Right cardiac atrium (tissue), 5 donors: ENCODE measurements at regions of chr11 and their contacts with region 1.

Region 1: DNA sequence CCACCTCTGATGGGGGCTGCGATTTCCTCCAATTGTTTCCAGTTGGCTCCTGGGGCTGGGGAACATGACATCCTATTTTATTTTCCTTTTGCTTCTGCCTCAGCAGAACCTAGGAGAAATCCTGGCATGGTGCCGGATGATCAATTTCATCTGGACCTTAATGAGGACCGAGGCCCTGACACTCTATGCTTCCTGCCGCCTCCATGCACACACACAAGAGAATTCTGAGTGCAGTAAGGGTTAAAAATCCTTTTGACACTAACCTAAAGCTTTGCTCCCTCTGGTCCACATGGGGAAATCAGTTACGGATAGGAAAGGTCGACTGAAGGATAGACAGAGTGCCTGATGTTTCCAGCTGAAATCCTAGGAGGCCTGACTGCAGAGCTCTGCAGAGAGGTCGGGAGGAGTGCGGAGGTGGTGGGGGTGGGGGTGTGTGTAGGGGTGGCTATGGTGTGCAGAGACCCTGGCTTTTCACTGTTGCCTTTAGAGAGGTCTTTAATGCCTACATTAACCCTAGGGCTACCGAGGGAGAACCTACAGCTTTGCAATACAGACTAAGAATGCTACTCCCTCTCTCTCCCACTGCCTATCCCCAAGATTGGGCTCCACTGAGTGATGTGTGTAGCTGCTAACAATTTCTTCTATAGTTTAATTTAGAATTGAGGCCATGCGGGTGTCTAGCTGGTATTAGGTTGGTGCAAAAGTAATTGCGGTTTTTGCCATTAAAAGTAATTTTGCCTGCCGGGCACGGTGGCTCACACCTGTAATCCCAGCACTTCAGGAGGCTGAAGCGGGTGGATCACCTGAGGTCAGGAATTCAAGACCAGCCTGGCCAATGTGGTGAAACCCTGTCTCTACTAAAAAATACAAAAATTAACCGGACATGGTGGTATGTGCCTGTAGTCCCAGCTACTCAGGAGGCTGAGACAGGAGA is 53.6 kb upstream of the INCENP start:
- DNase-seq: no peak
- ATAC-seq: no peak
- H3K4me3 ChIP-seq: no peak overlapping the region
- H3K27ac ChIP-seq: no peak overlapping the region
- H3K4me1 ChIP-seq: no peaks in the 10 kb centered on the region
- H3K27me3 ChIP-seq: no peaks in the 10 kb centered on the region

Region 2: GRCh38 chr11:61369372-61370219 is 700.7 kb before region 1 on chr11:
- intact Hi-C with region 1: no loop called
- DNase-seq: peak; percentile 60 to 80 (median 76)
- ATAC-seq: peak; percentile 91 to 92
- H3K4me3 ChIP-seq: no peak overlapping the region
- H3K27ac ChIP-seq: peak overlapping the region; percentile 67
- H3K4me1 ChIP-seq: peaks cover 4% of the 10 kb centered on the region
- H3K27me3 ChIP-seq: no peaks in the 10 kb centered on the region

Region 3: DNA sequence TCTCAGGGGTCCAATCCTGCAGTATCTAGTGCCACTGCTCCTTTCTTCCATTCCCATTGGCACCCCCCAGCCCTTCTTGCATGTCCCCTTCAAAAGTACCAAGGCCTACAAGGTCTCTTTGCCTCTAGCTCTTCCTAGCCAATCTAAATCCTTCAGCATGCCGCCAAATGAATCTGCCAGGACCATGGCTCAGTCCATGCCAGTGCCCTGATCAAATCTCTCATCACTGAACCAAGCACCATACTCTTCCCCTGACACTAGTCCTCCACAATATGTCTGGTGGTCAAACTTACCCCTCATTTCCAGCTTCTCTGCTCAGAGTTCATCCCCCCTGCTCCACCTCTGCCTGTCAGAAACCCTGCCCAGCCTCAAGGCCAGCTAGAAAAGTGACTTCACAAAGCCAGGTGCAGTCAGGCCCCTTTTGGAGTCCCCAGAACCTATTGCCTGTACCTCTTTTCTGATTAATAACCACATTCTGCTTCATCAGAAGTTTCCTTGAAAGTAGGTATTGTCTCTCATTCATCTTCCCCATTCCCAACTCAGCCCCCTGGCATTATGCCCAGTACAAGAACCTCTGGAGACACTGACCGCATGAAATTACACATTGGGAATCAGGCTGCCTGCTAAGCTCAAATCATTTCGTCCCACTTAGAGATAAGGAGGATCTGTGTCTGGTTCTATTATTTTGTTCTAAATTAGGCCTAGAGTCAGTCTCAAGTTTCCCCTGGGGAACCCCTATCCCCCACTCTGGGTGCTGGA is 266.2 kb before region 1 on chr11:
- intact Hi-C with region 1: loop called in 1 of 4 experiments (anchors 10 kb)
- DNase-seq: no peak
- ATAC-seq: no peak
- H3K4me3 ChIP-seq: no peak overlapping the region
- H3K27ac ChIP-seq: no peak overlapping the region
- H3K4me1 ChIP-seq: no peaks in the 10 kb centered on the region
- H3K27me3 ChIP-seq: no peaks in the 10 kb centered on the region